Ascending aorta (tissue), 2 donors: ENCODE measurements at regions of chr22 and their contacts with region 1.

Region 1: DNA sequence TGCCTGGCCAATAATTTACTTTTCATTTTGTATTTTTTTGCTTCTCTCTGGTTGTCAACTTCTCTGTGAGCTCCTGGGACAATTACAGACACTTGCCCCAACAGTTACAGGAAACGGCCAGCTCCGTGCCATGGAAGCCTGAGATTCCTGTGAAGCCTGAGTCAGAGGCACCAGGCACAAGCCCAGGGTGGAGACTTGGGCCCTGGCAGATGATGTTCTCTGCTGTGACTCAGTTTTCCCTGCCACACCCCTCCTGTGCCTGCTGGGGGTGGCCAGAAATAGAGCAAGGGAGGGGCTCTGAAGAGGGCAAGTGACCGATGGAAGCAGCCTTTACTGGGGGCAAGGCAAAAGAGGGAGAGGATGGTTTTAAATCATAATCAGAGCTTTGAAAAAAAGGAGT is 4.9 kb downstream of the ATP5MGL start:
- DNase-seq: peak; percentile 80 to 98
- H3K4me3 ChIP-seq: no peak overlapping the region
- H3K27ac ChIP-seq: peak overlapping the region; percentile 91 to 93
- H3K4me1 ChIP-seq: peaks cover 16 to 28% of the 10 kb centered on the region in 2 donors
- H3K27me3 ChIP-seq: no peaks in the 10 kb centered on the region
- CTCF ChIP-seq: no peak

Region 2: GRCh38 chr22:42614312-42615091 is 21.0 kb before region 1 on chr22 and contains the start of gene POLDIP3:
- intact Hi-C with region 1: loop called (anchors 1 kb)
- DNase-seq: peak; percentile 90 to 99
- H3K4me3 ChIP-seq: peak within 1 kb of the TSS; percentile 67 to 87
- H3K27ac ChIP-seq: peak within 1 kb of the TSS; percentile 88 to 98
- H3K4me1 ChIP-seq: peaks cover 10 to 48% of the 10 kb centered on the region in 2 donors
- H3K27me3 ChIP-seq: no peaks in the 10 kb centered on the region
- CTCF ChIP-seq: peak in 2 of 3 experiments; percentile 16 to 29
- total RNA-seq, gene POLDIP3: 22.9 TPM

Region 3: GRCh38 chr22:42856865-42857704 is 221.6 kb after region 1 on chr22 and contains the start of gene ARFGAP3:
- intact Hi-C with region 1: loop called (anchors 1 kb)
- DNase-seq: peak; percentile 65 to 96
- H3K4me3 ChIP-seq: peak within 1 kb of the TSS; percentile 68 to 96
- H3K27ac ChIP-seq: peak within 1 kb of the TSS; percentile 94 to 99
- H3K4me1 ChIP-seq: peaks cover 8 to 21% of the 10 kb centered on the region in 2 donors
- H3K27me3 ChIP-seq: no peaks in the 10 kb centered on the region
- CTCF ChIP-seq: peak in 1 of 3 experiments; percentile 6
- total RNA-seq, gene ARFGAP3: 21.6 TPM